Heart left ventricle (tissue), 16 donors: ENCODE measurements at regions of chr17 and their contacts with region 1.

Region 1: DNA sequence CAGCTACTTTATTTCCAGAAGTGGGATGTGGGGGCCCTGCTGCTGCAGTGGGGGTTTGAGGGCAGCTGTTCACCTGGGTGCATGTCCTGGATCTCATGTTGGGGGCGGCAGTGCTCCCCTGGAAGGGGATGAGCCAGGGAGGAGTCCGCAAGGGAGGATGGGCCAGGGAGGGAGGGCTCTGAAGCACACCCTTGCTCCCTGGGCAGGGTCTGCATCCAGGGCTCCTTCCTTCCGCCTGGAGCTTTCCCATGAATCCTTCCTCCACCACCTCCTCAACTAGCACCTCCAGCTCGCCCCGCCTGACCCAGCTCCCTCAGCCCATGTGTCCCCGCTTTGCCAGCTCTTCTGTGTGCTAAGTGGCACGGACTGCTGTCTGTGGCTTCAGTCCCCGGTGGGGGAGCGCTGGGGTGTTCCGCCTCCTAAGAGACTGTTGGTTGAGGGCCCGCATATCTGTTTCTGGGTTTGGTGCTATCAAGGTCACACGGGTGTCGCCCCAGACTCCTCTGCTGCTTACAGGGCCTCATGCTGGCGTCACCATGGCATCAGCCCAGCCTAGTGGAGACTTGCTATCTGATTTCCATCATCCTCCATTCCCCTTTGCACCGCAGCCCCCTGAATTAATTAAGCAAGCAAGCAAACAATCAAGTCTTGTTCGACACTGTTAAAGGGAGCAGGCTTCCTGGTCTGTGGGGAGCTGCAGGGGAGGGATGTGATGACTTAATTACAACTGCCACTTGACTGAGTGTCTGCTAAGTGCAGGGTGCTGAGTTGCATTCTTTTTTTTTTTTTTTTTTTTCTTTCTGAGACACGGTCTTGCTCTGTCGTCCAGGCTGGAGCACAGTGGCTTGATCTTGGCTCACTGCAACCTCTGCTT is 71.8 kb downstream of the PRKCA start:
- DNase-seq: peak; percentile 18 to 62 (median 45)
- ATAC-seq: peak; percentile 55 to 90 (median 72)
- H3K4me3 ChIP-seq: peak overlapping the region in 8 of 12 donors; percentile 6 to 40 (median 22)
- H3K27ac ChIP-seq: peak overlapping the region in 2 of 12 donors; percentile 54
- H3K4me1 ChIP-seq: peaks cover 0 to 9% (median 0%) of the 10 kb centered on the region in 12 donors
- H3K27me3 ChIP-seq: no peaks in the 10 kb centered on the region
- CTCF ChIP-seq: no peak
- POLR2A ChIP-seq: no peak

Region 2: DNA sequence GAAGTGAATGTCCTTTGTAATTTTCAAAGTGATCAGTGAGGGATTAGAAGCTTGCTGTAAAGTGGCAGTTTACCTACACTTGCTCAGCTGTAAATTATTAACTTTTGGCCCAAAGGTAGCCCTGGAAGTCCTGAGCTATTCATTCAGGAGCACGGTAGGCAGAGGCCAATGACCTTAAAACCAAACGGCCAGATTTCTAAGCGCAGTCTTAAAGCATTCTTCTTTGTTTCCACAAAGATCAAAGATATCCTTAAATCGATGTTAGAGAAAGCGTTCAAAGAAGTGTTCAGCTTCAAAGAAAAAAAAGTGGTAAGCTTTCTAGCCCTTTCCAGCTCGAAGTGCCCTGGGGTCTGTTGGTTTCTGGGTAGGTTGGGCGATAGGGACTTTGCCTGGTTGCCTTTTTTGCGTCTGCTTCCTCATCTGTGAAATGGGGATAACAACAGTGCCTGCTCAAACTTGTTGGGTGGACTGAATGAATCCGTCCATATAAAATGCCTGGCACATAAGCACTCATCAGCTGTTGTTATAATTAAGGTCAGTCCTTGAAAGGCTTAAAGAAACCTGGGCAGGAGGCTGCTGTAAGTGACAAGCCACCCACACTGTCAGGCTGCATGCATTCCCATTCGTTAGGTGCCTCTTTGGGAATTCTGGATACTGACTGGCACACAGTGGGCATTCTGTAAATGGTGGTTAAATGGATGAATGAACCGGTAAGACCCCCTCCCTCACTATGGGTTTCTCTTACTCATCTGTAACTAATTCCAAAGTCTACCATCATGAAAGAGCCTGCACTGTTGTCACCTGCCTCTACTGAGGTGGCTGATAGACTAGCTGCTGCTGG is 41.4 kb after region 1 on chr17:
- intact Hi-C with region 1: loop called in 1 of 10 experiments (anchors 2 kb)
- DNase-seq: no peak
- ATAC-seq: no peak
- H3K4me3 ChIP-seq: no peak overlapping the region
- H3K27ac ChIP-seq: no peak overlapping the region
- H3K4me1 ChIP-seq: peaks cover 0 to 9% (median 0%) of the 10 kb centered on the region in 12 donors
- H3K27me3 ChIP-seq: no peaks in the 10 kb centered on the region
- CTCF ChIP-seq: no peak
- POLR2A ChIP-seq: no peak

Region 3: GRCh38 chr17:66492561-66493005 is 118.4 kb after region 1 on chr17:
- intact Hi-C with region 1: no loop called
- DNase-seq: no peak
- ATAC-seq: no peak
- H3K4me3 ChIP-seq: no peak overlapping the region
- H3K27ac ChIP-seq: no peak overlapping the region
- H3K4me1 ChIP-seq: peaks cover 0 to 13% (median 0%) of the 10 kb centered on the region in 12 donors
- H3K27me3 ChIP-seq: no peaks in the 10 kb centered on the region
- CTCF ChIP-seq: no peak
- POLR2A ChIP-seq: no peak